CD8-positive, alpha-beta memory T cell (primary cell): ENCODE measurements at regions of chr6 and their contacts with region 1.

Region 1: GRCh38 chr6:41334482-41335040 is 847 bp upstream of the NCR2 start:
- DNase-seq: no peak
- H3K4me3 ChIP-seq: no peak overlapping the region
- H3K4me3 Mint-ChIP-seq: peak overlapping the region; percentile 66 to 78 (median 75)
- H3K27ac ChIP-seq: peak overlapping the region; percentile 44
- H3K27ac Mint-ChIP-seq: peak overlapping the region; percentile 93 to 98 (median 96)
- H3K4me1 ChIP-seq: peaks cover 43% of the 10 kb centered on the region
- H3K4me1 Mint-ChIP-seq: peaks cover 57 to 69% (median 59%) of the 10 kb centered on the region in 3 donors
- H3K27me3 ChIP-seq: no peaks in the 10 kb centered on the region
- H3K27me3 Mint-ChIP-seq: peaks cover 0 to 4% of the 10 kb centered on the region in 2 donors

Region 2: DNA sequence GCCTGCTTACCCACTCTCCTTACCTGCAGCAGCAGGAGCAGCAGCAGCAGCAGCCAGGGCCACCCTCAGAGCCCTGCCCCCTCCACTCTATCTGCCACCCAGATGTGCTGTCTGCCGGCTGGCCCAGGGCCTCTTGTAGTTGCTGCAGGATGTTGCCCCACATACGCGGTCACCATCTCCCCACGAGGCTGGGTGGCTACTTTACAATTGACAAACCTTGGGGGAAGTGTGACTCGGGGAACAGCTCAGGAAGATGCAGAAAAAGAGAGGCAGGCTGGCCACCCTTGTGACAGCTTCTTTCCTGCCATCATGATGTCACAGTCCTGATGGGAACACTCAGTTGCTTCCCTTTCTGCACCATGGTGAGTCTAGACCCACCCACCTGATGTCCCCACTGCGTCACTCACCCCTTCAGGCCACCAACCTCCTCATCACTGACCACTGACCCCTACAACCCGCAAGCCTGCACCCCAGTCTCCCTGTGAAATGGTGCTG is 62.6 kb before region 1 on chr6:
- CTCF ChIA-PET with region 1: no interaction called
- POLR2A ChIA-PET with region 1: no interaction called
- DNase-seq: no peak
- H3K4me3 ChIP-seq: no peak overlapping the region
- H3K4me3 Mint-ChIP-seq: no peak overlapping the region
- H3K27ac ChIP-seq: no peak overlapping the region
- H3K27ac Mint-ChIP-seq: peak overlapping the region in 3 of 8 donors; percentile 1 to 75 (median 60)
- H3K4me1 ChIP-seq: peaks cover 9% of the 10 kb centered on the region
- H3K4me1 Mint-ChIP-seq: peaks cover 0 to 3% (median 2%) of the 10 kb centered on the region in 3 donors
- H3K27me3 ChIP-seq: no peaks in the 10 kb centered on the region
- H3K27me3 Mint-ChIP-seq: peaks cover 2 to 11% of the 10 kb centered on the region in 2 donors

Region 3: DNA sequence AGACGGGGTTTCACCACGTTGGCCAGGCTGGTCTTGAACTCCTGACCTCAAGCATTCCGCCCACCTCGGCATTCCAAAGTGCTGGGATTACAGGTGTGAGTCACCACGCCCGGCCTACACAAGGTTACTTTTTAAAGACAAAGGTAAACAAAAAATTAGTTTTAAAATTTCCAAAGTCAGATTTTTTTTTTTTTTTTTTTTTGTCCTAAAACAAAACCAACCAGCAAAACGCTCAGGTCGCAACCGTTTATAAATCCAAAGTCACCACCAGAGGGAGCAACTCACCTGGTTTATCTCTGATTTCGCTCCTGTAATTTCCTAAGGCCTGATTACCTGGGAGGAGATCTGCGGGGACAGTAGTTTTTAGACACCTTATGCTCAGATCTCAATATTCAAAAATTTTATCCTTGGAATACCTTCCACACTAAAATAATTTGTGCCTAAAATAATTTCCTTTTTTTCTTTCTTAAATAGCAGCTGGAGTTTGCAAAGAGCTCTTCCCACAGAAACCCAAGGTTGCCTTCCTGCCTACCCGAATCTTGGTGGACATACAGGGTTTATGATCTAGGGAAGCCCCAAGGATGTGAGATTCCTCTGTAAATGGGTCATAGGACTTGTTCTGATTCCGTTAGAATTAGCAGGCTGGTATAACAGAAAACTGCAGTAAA is 28.2 kb before region 1 on chr6:
- CTCF ChIA-PET with region 1: interaction called, 17 read pairs
- POLR2A ChIA-PET with region 1: no interaction called
- DNase-seq: peak in 4 of 5 donors; percentile 4 to 46 (median 26)
- H3K4me3 ChIP-seq: no peak overlapping the region
- H3K4me3 Mint-ChIP-seq: no peak overlapping the region
- H3K27ac ChIP-seq: no peak overlapping the region
- H3K27ac Mint-ChIP-seq: peak overlapping the region in 1 of 8 donors; percentile 22
- H3K4me1 ChIP-seq: no peaks in the 10 kb centered on the region
- H3K4me1 Mint-ChIP-seq: peaks cover 0 to 5% (median 4%) of the 10 kb centered on the region in 3 donors
- H3K27me3 ChIP-seq: no peaks in the 10 kb centered on the region
- H3K27me3 Mint-ChIP-seq: peaks cover 9 to 33% of the 10 kb centered on the region in 2 donors

Region 4: DNA sequence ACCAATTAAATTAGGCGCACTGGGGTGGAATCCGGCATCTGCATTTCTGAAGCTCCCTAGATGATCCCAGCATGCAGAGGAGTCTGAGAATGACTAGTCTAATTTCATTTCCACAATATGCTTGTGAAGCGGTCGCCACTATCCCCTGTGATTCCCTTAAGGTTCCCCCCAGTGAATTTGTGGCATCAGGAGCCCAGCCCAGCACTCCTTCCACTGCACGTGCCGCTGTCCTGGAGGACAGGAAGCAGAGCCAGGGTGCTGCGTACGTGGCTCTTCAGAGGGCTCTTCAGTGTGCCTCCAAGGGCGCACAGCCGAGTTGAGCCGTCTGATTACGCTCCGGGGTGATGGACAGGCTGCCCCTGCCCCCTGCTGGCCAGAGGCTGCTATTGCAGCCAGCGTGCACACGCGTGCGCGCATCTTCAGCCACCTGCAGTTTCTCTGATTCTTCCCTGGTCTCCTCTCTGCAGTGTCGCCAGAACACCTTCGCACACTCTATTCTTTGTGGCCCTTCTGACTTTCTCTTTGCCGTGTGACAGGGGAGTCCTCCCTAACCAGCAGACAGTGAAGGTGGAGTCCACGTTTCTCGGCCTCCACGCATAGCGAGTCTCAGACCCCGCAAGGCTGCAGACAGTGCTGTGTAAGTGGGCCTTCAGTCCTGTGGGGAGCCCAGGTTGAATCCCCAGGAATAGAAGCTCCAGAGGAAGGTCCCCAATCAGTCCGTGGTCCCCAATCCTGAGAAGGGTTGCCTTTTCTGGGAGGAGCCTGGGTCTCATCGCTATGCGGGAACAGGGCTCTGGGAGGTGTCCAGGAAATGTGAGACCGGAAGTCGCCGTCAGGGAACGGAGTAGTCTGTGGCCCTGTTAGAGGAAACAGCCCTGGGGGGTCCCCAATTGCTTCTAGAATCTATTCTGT is 15.7 kb before region 1 on chr6:
- CTCF ChIA-PET with region 1: interaction called, 36 read pairs
- POLR2A ChIA-PET with region 1: no interaction called
- DNase-seq: peak; percentile 69 to 83 (median 75)
- H3K4me3 ChIP-seq: peak overlapping the region; percentile 34
- H3K4me3 Mint-ChIP-seq: peak overlapping the region in 6 of 7 donors; percentile 50 to 71 (median 70)
- H3K27ac ChIP-seq: no peak overlapping the region
- H3K27ac Mint-ChIP-seq: peak overlapping the region in 2 of 8 donors; percentile 13 to 32
- H3K4me1 ChIP-seq: peaks cover 12% of the 10 kb centered on the region
- H3K4me1 Mint-ChIP-seq: peaks cover 7 to 15% (median 10%) of the 10 kb centered on the region in 3 donors
- H3K27me3 ChIP-seq: peaks cover 10% of the 10 kb centered on the region
- H3K27me3 Mint-ChIP-seq: peaks cover 5 to 40% of the 10 kb centered on the region in 2 donors

Region 5: GRCh38 chr6:41344876-41345275 is 10.3 kb after region 1 on chr6:
- CTCF ChIA-PET with region 1: interaction called, 14 read pairs
- POLR2A ChIA-PET with region 1: interaction called, 12 read pairs
- DNase-seq: peak in 3 of 5 donors; percentile 55 to 61 (median 58)
- H3K4me3 ChIP-seq: no peak overlapping the region
- H3K4me3 Mint-ChIP-seq: peak overlapping the region in 6 of 7 donors; percentile 6 to 81 (median 61)
- H3K27ac ChIP-seq: no peak overlapping the region
- H3K27ac Mint-ChIP-seq: peak overlapping the region; percentile 56 to 99 (median 94)
- H3K4me1 ChIP-seq: peaks cover 23% of the 10 kb centered on the region
- H3K4me1 Mint-ChIP-seq: peaks cover 28 to 30% (median 29%) of the 10 kb centered on the region in 3 donors
- H3K27me3 ChIP-seq: no peaks in the 10 kb centered on the region
- H3K27me3 Mint-ChIP-seq: peaks cover 3 to 7% of the 10 kb centered on the region in 2 donors

Region 6: DNA sequence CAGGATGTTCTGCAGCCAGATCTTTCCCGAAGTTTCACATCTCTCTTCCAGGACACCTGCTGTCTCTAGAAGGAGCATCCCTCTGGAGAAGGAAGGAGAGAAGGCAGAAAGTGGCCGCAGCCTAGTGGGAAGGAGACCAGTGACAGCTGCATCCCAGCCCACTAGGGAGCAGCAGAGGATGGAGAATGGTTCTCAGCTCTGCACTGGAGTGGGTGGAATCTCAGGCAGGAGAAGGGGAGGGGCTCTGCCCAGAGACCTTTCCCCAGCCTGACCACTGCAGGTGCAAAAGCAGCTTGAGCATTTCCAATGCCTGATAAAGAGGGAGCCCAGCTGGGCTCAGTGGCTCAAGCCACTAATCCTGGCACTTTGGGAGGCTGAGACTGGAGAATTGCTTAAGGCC is 33.1 kb after region 1 on chr6:
- CTCF ChIA-PET with region 1: interaction called, 21 read pairs
- POLR2A ChIA-PET with region 1: interaction called, 4 read pairs
- DNase-seq: no peak
- H3K4me3 ChIP-seq: no peak overlapping the region
- H3K4me3 Mint-ChIP-seq: no peak overlapping the region
- H3K27ac ChIP-seq: no peak overlapping the region
- H3K27ac Mint-ChIP-seq: no peak overlapping the region
- H3K4me1 ChIP-seq: no peaks in the 10 kb centered on the region
- H3K4me1 Mint-ChIP-seq: peaks cover 18 to 27% (median 21%) of the 10 kb centered on the region in 3 donors
- H3K27me3 ChIP-seq: peaks cover 17% of the 10 kb centered on the region
- H3K27me3 Mint-ChIP-seq: peaks cover 53 to 57% of the 10 kb centered on the region in 2 donors